Sigmoid colon (tissue), 7 donors: ENCODE measurements at regions of chr12 and their contacts with region 1.

Region 1: GRCh38 chr12:64890873-64891468 is 66.5 kb downstream of the TBC1D30 start:
- DNase-seq: no peak
- H3K4me3 ChIP-seq: no peak overlapping the region
- H3K27ac ChIP-seq: no peak overlapping the region
- H3K4me1 ChIP-seq: no peaks in the 10 kb centered on the region
- H3K27me3 ChIP-seq: no peaks in the 10 kb centered on the region
- CTCF ChIP-seq: peak; percentile 66 to 78 (median 72)
- EP300 ChIP-seq: no peak
- POLR2A ChIP-seq: no peak

Region 2: GRCh38 chr12:64950711-64951298 is 59.8 kb after region 1 on chr12:
- intact Hi-C with region 1: no loop called
- DNase-seq: no peak
- H3K4me3 ChIP-seq: no peak overlapping the region
- H3K27ac ChIP-seq: no peak overlapping the region
- H3K4me1 ChIP-seq: peaks cover 0 to 10% (median 7%) of the 10 kb centered on the region in 4 donors
- H3K27me3 ChIP-seq: no peaks in the 10 kb centered on the region
- CTCF ChIP-seq: no peak
- EP300 ChIP-seq: no peak
- POLR2A ChIP-seq: no peak

Region 3: DNA sequence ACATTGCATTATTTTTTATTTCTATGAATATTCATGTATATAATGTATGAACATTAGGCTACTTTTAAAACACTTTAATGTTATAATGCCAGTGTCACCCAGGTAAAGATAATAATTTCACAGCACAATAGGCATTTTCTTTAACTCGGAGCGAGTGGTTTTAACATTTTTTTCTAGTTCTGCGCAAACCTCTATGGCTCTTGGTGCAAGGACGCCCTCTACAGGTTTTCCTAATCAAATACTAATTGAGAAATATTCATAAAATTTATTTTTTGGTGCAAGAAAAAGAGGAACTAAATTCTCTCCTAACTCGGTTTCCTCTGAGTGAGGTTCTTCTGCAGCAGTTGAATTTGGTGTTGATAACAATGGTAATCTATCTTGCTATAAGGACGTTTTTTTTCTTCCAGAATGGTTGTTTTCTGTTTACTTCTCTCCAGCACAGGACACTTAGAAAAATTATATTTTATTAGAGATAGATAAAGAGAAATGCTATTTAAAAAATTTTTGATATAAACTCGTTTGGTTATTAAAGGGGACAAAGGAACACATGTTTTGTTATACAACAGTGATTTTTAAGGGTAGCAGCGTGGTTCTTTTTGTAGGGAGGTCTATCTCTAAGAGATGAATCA is 232.6 kb after region 1 on chr12:
- intact Hi-C with region 1: loop called (anchors 2 kb)
- DNase-seq: no peak
- H3K4me3 ChIP-seq: no peak overlapping the region
- H3K27ac ChIP-seq: no peak overlapping the region
- H3K4me1 ChIP-seq: peaks cover 0 to 9% (median 9%) of the 10 kb centered on the region in 4 donors
- H3K27me3 ChIP-seq: peaks cover 8 to 59% (median 33%) of the 10 kb centered on the region in 3 donors
- CTCF ChIP-seq: peak in 3 of 4 experiments; percentile 12 to 37 (median 30)
- EP300 ChIP-seq: no peak
- POLR2A ChIP-seq: no peak

Region 4: DNA sequence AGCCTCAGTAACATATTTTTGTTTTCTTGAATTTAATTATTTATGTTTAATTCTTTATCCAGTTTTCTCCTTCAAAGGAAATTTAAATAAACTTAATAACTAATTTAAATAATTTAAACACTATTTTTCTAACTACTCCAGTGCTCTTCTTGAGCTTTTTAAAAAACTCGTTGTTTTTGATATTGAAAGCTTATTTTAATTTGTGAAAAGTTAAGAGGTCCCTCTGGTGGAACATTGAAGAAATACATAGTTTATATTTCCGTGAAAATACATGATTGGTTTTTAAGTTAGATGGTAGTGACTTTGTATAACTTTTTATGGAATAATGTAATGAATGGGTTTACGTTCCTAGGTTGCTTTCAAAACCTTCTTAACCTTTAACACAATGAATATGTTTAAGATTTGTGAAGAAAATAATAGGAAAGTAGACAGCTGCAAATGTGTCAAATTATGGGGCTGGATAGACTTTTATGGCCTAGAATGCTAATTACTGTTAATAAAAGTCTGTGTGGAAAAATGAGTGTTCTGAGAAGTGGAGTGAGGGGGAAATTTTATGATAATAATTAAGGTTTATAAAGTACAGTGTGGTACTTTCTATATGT is 341.6 kb after region 1 on chr12:
- intact Hi-C with region 1: loop called (anchors 5 kb)
- DNase-seq: no peak
- H3K4me3 ChIP-seq: no peak overlapping the region
- H3K27ac ChIP-seq: no peak overlapping the region
- H3K4me1 ChIP-seq: no peaks in the 10 kb centered on the region
- H3K27me3 ChIP-seq: no peaks in the 10 kb centered on the region
- CTCF ChIP-seq: peak in 2 of 4 experiments; percentile 14 to 42
- EP300 ChIP-seq: no peak
- POLR2A ChIP-seq: no peak

Region 5: DNA sequence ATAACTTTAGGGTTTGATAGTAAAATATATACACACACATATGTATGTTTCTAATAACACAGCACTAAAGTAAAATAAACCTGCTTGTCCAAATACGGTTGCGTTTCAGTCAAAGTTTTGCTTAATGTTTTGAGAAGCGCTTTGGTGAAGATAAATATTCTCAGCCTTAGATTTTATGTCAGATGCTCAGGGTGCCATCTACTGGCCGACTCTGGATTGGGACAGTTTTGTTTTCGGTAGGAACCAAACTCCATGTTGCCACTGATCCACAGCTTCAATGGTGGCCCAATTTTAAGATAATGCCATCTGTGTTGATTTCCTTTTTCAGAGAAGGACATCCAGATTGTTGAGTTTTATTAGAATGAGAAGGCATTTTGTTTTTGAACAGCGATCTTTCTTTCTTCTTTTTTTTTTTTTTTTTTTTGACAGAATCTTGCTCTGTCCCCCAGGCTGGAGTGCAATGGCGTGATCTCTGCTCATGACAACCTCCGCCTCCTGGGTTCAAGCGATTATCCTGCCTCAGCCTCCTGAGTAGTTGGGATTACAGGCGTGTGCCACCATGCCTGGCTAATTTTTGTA is 1196.5 kb after region 1 on chr12:
- intact Hi-C with region 1: loop called (anchors 5 kb)
- DNase-seq: peak; percentile 71
- H3K4me3 ChIP-seq: no peak overlapping the region
- H3K27ac ChIP-seq: no peak overlapping the region
- H3K4me1 ChIP-seq: no peaks in the 10 kb centered on the region
- H3K27me3 ChIP-seq: no peaks in the 10 kb centered on the region
- CTCF ChIP-seq: peak in 3 of 4 experiments; percentile 46 to 66 (median 52)
- EP300 ChIP-seq: no peak
- POLR2A ChIP-seq: no peak

Region 6: GRCh38 chr12:66107451-66107915 is 1216.5 kb after region 1 on chr12:
- intact Hi-C with region 1: loop called (anchors 5 kb)
- DNase-seq: peak; percentile 65
- H3K4me3 ChIP-seq: no peak overlapping the region
- H3K27ac ChIP-seq: no peak overlapping the region
- H3K4me1 ChIP-seq: no peaks in the 10 kb centered on the region
- H3K27me3 ChIP-seq: no peaks in the 10 kb centered on the region
- CTCF ChIP-seq: peak; percentile 54 to 83 (median 61)
- EP300 ChIP-seq: no peak
- POLR2A ChIP-seq: no peak